ENCODE measurements at regions of chr2 and their contacts with region 1.

Region 1: DNA sequence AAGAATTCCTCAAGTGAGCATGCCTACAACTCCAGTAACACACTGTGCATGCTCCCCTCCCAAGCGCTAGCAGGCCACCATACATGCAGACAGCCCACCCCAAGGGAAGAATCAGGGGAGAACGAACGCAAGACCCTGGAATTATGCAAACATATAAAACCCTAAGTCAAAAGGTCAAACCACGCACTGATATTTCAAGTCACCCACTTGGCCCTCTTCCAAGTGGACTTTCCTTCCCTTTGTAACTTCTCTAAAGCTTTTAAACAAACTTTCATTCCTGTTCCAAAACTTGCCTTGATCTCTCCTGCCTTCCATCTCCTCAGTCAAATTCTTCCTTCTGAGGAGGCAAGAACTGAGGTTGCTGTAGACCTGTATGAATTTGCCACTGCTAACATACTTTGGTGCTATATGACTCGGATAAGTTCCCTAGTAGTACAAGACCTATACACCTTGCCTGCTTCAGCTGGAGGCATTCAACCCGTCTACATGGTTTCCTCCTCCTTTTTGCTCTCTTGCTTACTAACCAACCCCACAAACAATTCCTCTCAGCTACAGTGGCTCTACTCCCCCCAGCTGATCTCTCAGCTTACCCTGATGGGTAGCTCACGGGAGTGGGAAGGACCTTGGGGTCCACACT is 11.1 kb upstream of the RPIA start:
- DNase-seq: no peak
- ATAC-seq: no peak
- H3K4me3 Mint-ChIP-seq: no peak overlapping the region
- H3K27ac Mint-ChIP-seq: no peak overlapping the region
- H3K4me1 Mint-ChIP-seq: no peaks in the 10 kb centered on the region
- H3K27me3 Mint-ChIP-seq: no peaks in the 10 kb centered on the region

Region 2: DNA sequence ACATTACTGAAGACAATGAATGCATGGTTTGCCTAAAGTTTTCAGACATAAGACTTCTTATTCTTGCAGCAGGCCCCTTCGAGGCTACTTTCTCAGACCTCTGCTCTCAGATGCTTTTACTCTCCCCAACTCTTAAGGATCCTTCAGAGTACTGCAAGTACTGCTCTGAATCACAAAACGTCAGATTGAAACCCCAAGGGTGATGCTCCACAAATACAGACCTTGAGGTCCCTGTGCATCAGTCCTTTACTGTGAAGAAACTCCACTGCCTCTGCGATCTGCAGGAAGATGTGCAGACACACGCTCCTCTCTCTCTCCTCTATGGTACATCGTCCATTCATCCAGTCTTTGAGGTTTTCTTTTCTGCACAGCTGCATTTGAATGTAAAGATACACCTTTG is 105.9 kb before region 1 on chr2:
- CTCF ChIA-PET with region 1: no interaction called
- POLR2A ChIA-PET with region 1: no interaction called
- intact Hi-C with region 1: no loop called
- DNase-seq: peak; percentile 12
- ATAC-seq: peak; percentile 82
- H3K4me3 Mint-ChIP-seq: no peak overlapping the region
- H3K27ac Mint-ChIP-seq: no peak overlapping the region
- H3K4me1 Mint-ChIP-seq: peaks cover 7% of the 10 kb centered on the region
- H3K27me3 Mint-ChIP-seq: no peaks in the 10 kb centered on the region

Region 3: GRCh38 chr2:88659538-88659916 is 20.9 kb before region 1 on chr2:
- CTCF ChIA-PET with region 1: no interaction called
- POLR2A ChIA-PET with region 1: no interaction called
- intact Hi-C with region 1: loop called in 1 of 2 experiments (anchors 2 kb)
- DNase-seq: no peak
- ATAC-seq: no peak
- H3K4me3 Mint-ChIP-seq: no peak overlapping the region
- H3K27ac Mint-ChIP-seq: no peak overlapping the region
- H3K4me1 Mint-ChIP-seq: no peaks in the 10 kb centered on the region
- H3K27me3 Mint-ChIP-seq: no peaks in the 10 kb centered on the region

Measured in activated CD4-positive, alpha-beta T cell treated with anti-CD3 and anti-CD28 coated beads for 36 hours (primary cell).